ENCODE measurements at regions of chr18 and their contacts with region 1.

Region 1: DNA sequence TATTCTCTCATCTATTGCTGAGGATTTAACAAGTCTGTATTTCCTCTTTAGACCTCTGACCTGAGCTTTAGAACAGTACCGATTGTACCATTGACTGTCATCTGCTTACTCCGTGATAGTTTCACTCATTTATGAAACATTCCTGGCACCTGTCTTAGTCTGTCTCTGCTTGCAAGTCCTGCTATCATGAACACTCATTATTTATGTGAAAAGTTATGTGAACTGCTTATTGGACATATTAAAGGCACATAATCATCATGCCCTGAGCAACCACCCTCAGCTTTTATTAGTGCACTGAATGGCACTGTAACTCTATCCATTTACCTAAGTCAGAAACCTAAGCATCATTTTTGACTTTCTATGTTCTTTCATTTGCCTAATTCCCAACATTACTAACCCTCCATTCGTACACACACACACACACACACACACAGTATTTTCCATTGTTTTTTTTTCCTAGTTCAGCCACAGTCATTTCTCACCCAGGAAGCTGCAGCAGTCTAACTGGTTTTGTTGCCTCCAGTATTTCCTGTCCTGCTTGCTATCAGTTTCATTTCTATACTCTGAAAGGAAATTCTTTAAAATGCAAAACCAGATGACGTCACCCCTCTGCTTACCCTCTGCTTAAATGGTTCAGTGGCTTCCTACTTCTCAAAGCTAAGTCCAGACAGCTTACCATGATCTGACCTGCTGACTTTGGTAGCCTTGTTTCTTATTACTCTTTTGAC is 146.1 kb downstream of the HAUS1 start:
- DNase-seq: peak; percentile 81
- H3K4me3 Mint-ChIP-seq: peak overlapping the region; percentile 51
- H3K27ac Mint-ChIP-seq: peak overlapping the region; percentile 95
- H3K4me1 Mint-ChIP-seq: peaks cover 39% of the 10 kb centered on the region
- H3K27me3 Mint-ChIP-seq: no peaks in the 10 kb centered on the region
- CTCF ChIP-seq: no peak

Region 2: GRCh38 chr18:46182633-46183358 is 67.5 kb before region 1 on chr18:
- CTCF ChIA-PET with region 1: interaction called, 11 read pairs
- intact Hi-C with region 1: no loop called
- DNase-seq: no peak
- H3K4me3 Mint-ChIP-seq: peak overlapping the region; percentile 10
- H3K27ac Mint-ChIP-seq: no peak overlapping the region
- H3K4me1 Mint-ChIP-seq: peaks cover 36% of the 10 kb centered on the region
- H3K27me3 Mint-ChIP-seq: no peaks in the 10 kb centered on the region
- CTCF ChIP-seq: no peak

Measured in Calu3 (cell line).